ENCODE measurements at regions of chr10 and their contacts with region 1.

Region 1: DNA sequence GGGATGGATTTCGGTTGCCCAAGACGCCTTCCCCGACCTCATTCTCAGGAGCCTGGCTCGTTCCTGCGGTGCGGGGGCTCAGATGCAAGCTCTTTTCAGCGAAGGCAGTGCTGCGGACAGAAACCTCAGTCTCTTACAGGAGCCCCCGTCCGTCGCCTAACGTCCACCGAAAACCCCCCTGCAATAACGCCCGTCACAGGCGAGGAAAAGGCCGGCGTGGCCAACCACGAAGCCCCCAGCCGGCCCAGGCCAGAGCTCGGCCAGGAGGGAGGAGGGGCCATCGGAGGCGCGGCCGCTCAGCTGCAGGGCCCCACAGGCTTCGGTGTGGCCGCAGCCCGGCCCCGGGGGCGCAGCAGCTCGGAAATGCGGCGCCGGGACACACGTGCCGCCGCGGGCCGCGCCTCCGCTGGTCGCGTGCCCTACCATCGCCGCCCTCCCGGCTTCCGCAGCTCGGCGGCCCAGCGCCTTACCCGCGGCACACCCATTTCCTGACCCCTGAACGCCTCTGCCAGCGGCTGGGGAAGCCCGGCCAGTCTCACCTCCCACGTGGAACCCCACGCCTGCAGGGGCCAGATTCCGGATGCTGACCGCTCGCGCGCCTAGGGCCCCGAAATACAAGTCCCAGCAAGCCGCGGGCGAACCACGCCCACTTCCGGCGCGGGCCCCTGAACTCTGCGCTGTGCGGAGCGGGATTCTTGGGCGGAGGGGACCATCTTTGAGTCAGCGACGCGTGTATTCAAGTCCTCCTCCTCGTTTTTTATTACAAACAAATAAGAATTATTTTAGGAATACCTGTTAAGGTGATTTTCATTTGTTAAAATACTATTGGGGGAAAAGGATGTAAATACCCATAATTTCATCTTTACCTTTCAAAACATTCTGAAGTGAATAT is at the start of gene ZNF239:
- DNase-seq: peak; percentile 80 to 83 (median 83)
- H3K4me3 ChIP-seq: peak within 1 kb of the TSS; percentile 15 to 54
- H3K4me3 Mint-ChIP-seq: peak within 1 kb of the TSS; percentile 80 to 90 (median 88)
- H3K27ac ChIP-seq: peak within 1 kb of the TSS; percentile 58
- H3K27ac Mint-ChIP-seq: peak within 1 kb of the TSS; percentile 88 to 98 (median 95)
- H3K4me1 ChIP-seq: peaks cover 48% of the 10 kb centered on the region
- H3K4me1 Mint-ChIP-seq: peaks cover 38 to 65% (median 49%) of the 10 kb centered on the region in 4 donors
- H3K27me3 ChIP-seq: no peaks in the 10 kb centered on the region
- H3K27me3 Mint-ChIP-seq: no peaks in the 10 kb centered on the region
- total RNA-seq, gene ZNF239: 5.8 to 6.2 TPM

Region 2: DNA sequence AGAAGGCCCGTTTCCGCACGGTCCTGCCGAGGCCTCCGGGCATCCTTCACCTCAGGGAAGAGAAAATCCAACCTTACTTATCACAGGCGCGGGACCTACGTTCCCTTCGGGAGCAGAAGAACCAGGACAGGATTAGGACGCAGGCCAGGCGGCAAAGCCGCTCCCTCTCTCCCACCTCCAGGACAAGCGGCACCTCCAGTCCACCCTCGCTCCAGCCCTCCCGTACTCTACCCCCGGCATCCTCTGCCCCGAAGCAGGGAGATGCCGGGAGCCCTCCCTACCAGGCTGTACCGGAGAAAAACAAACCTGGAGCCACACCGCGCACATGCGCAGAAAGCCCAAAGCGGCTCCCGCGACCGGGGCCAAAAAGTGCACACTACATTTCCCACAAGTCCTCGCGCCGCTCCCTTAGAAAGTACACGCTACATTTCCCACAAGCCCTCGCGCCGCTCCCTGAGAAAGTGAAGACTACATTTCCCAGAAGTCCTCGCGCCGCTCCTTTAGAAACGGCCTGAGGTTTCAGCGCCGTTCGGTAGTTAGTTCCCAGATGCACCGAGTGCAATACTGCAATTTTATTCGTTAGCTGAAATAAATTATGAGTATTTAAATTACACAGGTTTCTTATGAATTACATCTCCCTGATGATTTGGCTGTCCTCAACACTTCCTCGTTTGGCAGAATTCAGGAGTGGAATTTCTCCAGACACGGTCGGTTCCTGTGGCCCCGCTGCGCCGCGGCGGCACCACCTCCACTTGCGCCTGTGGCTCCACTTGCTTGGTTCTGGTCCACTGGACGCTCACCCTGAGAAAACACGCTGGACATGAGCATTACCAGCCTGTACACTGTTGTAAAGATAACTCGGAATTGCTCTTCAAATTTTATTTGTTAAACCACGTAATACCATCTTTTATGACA is 1021.5 kb before region 1 on chr10:
- CTCF ChIA-PET with region 1: no interaction called
- POLR2A ChIA-PET with region 1: no interaction called
- intact Hi-C with region 1: loop called (anchors 2 kb)
- DNase-seq: peak; percentile 90 to 94 (median 92)
- H3K4me3 ChIP-seq: peak overlapping the region; percentile 96 to 100
- H3K4me3 Mint-ChIP-seq: peak overlapping the region; percentile 97 to 100 (median 98)
- H3K27ac ChIP-seq: peak overlapping the region; percentile 83
- H3K27ac Mint-ChIP-seq: peak overlapping the region; percentile 88 to 98 (median 97)
- H3K4me1 ChIP-seq: peaks cover 34% of the 10 kb centered on the region
- H3K4me1 Mint-ChIP-seq: peaks cover 29 to 45% (median 38%) of the 10 kb centered on the region in 4 donors
- H3K27me3 ChIP-seq: no peaks in the 10 kb centered on the region
- H3K27me3 Mint-ChIP-seq: no peaks in the 10 kb centered on the region

Region 3: GRCh38 chr10:42638055-42638820 is 936.0 kb before region 1 on chr10 and contains the start of gene ZNF33B:
- CTCF ChIA-PET with region 1: no interaction called
- POLR2A ChIA-PET with region 1: no interaction called
- intact Hi-C with region 1: loop called (anchors 2 kb)
- DNase-seq: peak; percentile 92 to 96 (median 95)
- H3K4me3 ChIP-seq: peak within 1 kb of the TSS; percentile 95 to 99
- H3K4me3 Mint-ChIP-seq: peak within 1 kb of the TSS; percentile 95 to 99 (median 98)
- H3K27ac ChIP-seq: peak within 1 kb of the TSS; percentile 84
- H3K27ac Mint-ChIP-seq: peak within 1 kb of the TSS; percentile 97 to 100 (median 98)
- H3K4me1 ChIP-seq: peaks cover 25% of the 10 kb centered on the region
- H3K4me1 Mint-ChIP-seq: peaks cover 24 to 53% (median 34%) of the 10 kb centered on the region in 4 donors
- H3K27me3 ChIP-seq: no peaks in the 10 kb centered on the region
- H3K27me3 Mint-ChIP-seq: no peaks in the 10 kb centered on the region
- total RNA-seq, gene ZNF33B: 71.3 to 76.4 TPM

Region 4: GRCh38 chr10:43407576-43408330 is 166.5 kb before region 1 on chr10:
- CTCF ChIA-PET with region 1: no interaction called
- POLR2A ChIA-PET with region 1: no interaction called
- intact Hi-C with region 1: loop called (anchors 5 kb)
- DNase-seq: peak; percentile 81 to 89 (median 84)
- H3K4me3 ChIP-seq: peak overlapping the region; percentile 83 to 85
- H3K4me3 Mint-ChIP-seq: peak overlapping the region; percentile 94 to 100 (median 98)
- H3K27ac ChIP-seq: peak overlapping the region; percentile 100
- H3K27ac Mint-ChIP-seq: peak overlapping the region; percentile 93 to 100 (median 99)
- H3K4me1 ChIP-seq: peaks cover 39% of the 10 kb centered on the region
- H3K4me1 Mint-ChIP-seq: peaks cover 18 to 53% (median 27%) of the 10 kb centered on the region in 4 donors
- H3K27me3 ChIP-seq: no peaks in the 10 kb centered on the region
- H3K27me3 Mint-ChIP-seq: no peaks in the 10 kb centered on the region

Region 5: GRCh38 chr10:43594944-43595589 is 20.8 kb after region 1 on chr10:
- CTCF ChIA-PET with region 1: no interaction called
- POLR2A ChIA-PET with region 1: interaction called, 27 read pairs
- intact Hi-C with region 1: loop called (anchors 2 kb)
- DNase-seq: peak in 4 of 5 donors; percentile 29 to 57 (median 46)
- H3K4me3 ChIP-seq: peak overlapping the region; percentile 21 to 44
- H3K4me3 Mint-ChIP-seq: peak overlapping the region; percentile 81 to 95 (median 89)
- H3K27ac ChIP-seq: peak overlapping the region; percentile 34
- H3K27ac Mint-ChIP-seq: peak overlapping the region; percentile 70 to 95 (median 89)
- H3K4me1 ChIP-seq: peaks cover 25% of the 10 kb centered on the region
- H3K4me1 Mint-ChIP-seq: peaks cover 23 to 32% (median 26%) of the 10 kb centered on the region in 4 donors
- H3K27me3 ChIP-seq: no peaks in the 10 kb centered on the region
- H3K27me3 Mint-ChIP-seq: peaks cover 0 to 1% of the 10 kb centered on the region in 2 donors

Region 6: GRCh38 chr10:43606322-43607198 is 32.3 kb after region 1 on chr10 and contains the start of gene ZNF485:
- CTCF ChIA-PET with region 1: interaction called, 3 read pairs
- POLR2A ChIA-PET with region 1: interaction called, 21 read pairs
- intact Hi-C with region 1: loop called (anchors 1 kb)
- DNase-seq: peak; percentile 41 to 61 (median 56)
- H3K4me3 ChIP-seq: peak within 1 kb of the TSS; percentile 58 to 59
- H3K4me3 Mint-ChIP-seq: peak within 1 kb of the TSS; percentile 81 to 88 (median 86)
- H3K27ac ChIP-seq: peak within 1 kb of the TSS; percentile 52
- H3K27ac Mint-ChIP-seq: peak within 1 kb of the TSS; percentile 70 to 95 (median 86)
- H3K4me1 ChIP-seq: peaks cover 12% of the 10 kb centered on the region
- H3K4me1 Mint-ChIP-seq: peaks cover 17 to 45% (median 30%) of the 10 kb centered on the region in 4 donors
- H3K27me3 ChIP-seq: no peaks in the 10 kb centered on the region
- H3K27me3 Mint-ChIP-seq: no peaks in the 10 kb centered on the region
- total RNA-seq, gene ZNF485: 9.0 to 10.4 TPM

Region 7: GRCh38 chr10:43648398-43649184 is 74.3 kb after region 1 on chr10 and contains the start of gene ZNF32:
- CTCF ChIA-PET with region 1: interaction called, 5 read pairs
- POLR2A ChIA-PET with region 1: interaction called, 36 read pairs
- intact Hi-C with region 1: loop called (anchors 1 kb)
- DNase-seq: peak; percentile 80 to 83 (median 82)
- H3K4me3 ChIP-seq: peak within 1 kb of the TSS; percentile 66 to 78
- H3K4me3 Mint-ChIP-seq: peak within 1 kb of the TSS; percentile 93 to 98 (median 94)
- H3K27ac ChIP-seq: peak within 1 kb of the TSS; percentile 76
- H3K27ac Mint-ChIP-seq: peak within 1 kb of the TSS; percentile 84 to 96 (median 93)
- H3K4me1 ChIP-seq: peaks cover 18% of the 10 kb centered on the region
- H3K4me1 Mint-ChIP-seq: peaks cover 11 to 38% (median 18%) of the 10 kb centered on the region in 4 donors
- H3K27me3 ChIP-seq: no peaks in the 10 kb centered on the region
- H3K27me3 Mint-ChIP-seq: peaks cover 4 to 6% of the 10 kb centered on the region in 2 donors
- total RNA-seq, gene ZNF32: 35.5 to 39.5 TPM

Region 8: GRCh38 chr10:43754569-43755260 is 180.5 kb after region 1 on chr10:
- CTCF ChIA-PET with region 1: no interaction called
- POLR2A ChIA-PET with region 1: no interaction called
- intact Hi-C with region 1: no loop called
- DNase-seq: no peak
- H3K4me3 ChIP-seq: no peak overlapping the region
- H3K4me3 Mint-ChIP-seq: no peak overlapping the region
- H3K27ac ChIP-seq: no peak overlapping the region
- H3K27ac Mint-ChIP-seq: peak overlapping the region in 1 of 7 donors; percentile 34
- H3K4me1 ChIP-seq: no peaks in the 10 kb centered on the region
- H3K4me1 Mint-ChIP-seq: no peaks in the 10 kb centered on the region
- H3K27me3 ChIP-seq: no peaks in the 10 kb centered on the region
- H3K27me3 Mint-ChIP-seq: no peaks in the 10 kb centered on the region

Region 9: DNA sequence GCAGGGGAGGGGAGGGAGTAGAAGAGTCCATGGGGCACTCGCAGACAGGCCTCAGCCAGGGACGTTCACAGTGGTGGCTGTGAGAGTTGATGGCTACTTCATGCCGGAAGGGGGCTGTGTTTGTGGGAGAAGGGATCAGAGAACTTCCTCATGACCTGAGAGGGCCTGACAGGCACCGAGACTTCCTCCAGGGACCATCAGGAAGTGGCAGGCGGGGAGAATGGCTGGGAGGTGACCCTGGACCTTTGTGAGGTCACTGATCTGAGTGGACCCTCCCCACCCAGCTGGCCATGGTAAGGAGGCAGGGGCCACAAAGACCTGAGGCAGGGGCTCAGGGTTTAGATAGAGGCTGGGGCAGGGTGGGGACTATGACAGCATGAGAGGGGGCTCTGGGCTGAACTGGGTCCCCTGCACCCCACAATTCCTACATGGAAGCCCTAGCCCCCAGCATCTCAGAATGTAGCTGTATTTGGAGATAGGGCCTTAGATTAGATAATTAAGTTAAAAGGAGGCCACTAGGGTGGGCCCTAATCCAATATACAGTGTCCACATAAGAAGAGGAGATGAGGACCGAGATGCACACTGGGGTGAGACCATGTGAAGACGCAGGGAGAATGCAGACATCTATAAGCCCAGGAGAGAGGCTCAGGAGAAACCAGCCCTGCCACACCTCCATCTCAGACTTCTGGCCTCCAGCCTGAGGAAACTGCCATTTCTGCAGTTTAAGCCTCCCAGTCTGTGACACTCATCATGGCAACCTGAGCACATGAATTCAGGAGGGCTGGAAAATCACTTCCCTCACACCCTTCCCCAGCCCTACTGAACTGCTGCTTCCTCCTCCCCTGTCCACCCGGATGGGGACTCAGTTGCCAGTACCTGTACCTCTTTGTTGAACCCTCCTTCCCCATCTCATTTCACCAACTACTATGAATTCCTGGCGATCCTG is 348.4 kb after region 1 on chr10:
- CTCF ChIA-PET with region 1: no interaction called
- POLR2A ChIA-PET with region 1: no interaction called
- intact Hi-C with region 1: no loop called
- DNase-seq: no peak
- H3K4me3 ChIP-seq: no peak overlapping the region
- H3K4me3 Mint-ChIP-seq: no peak overlapping the region
- H3K27ac ChIP-seq: no peak overlapping the region
- H3K27ac Mint-ChIP-seq: peak overlapping the region in 1 of 7 donors; percentile 9
- H3K4me1 ChIP-seq: no peaks in the 10 kb centered on the region
- H3K4me1 Mint-ChIP-seq: no peaks in the 10 kb centered on the region
- H3K27me3 ChIP-seq: no peaks in the 10 kb centered on the region
- H3K27me3 Mint-ChIP-seq: peaks cover 6 to 7% of the 10 kb centered on the region in 2 donors

Region 10: GRCh38 chr10:44557596-44558191 is 983.4 kb after region 1 on chr10:
- CTCF ChIA-PET with region 1: no interaction called
- POLR2A ChIA-PET with region 1: no interaction called
- intact Hi-C with region 1: no loop called
- DNase-seq: no peak
- H3K4me3 ChIP-seq: no peak overlapping the region
- H3K4me3 Mint-ChIP-seq: no peak overlapping the region
- H3K27ac ChIP-seq: no peak overlapping the region
- H3K27ac Mint-ChIP-seq: no peak overlapping the region
- H3K4me1 ChIP-seq: no peaks in the 10 kb centered on the region
- H3K4me1 Mint-ChIP-seq: no peaks in the 10 kb centered on the region
- H3K27me3 ChIP-seq: no peaks in the 10 kb centered on the region
- H3K27me3 Mint-ChIP-seq: no peaks in the 10 kb centered on the region